MCF 10A (cell line): ENCODE measurements at regions of chr18 and their contacts with region 1.

Region 1: GRCh38 chr18:74896390-74896991 is 298.8 kb downstream of the ZNF407 start:
- DNase-seq: peak; percentile 60
- H3K4me3 Mint-ChIP-seq: no peak overlapping the region
- H3K27ac Mint-ChIP-seq: no peak overlapping the region
- H3K4me1 Mint-ChIP-seq: peaks cover 19% of the 10 kb centered on the region
- H3K27me3 Mint-ChIP-seq: no peaks in the 10 kb centered on the region
- CTCF ChIP-seq: peak; percentile 52

Region 2: GRCh38 chr18:74951165-74951760 is 54.8 kb after region 1 on chr18:
- CTCF ChIA-PET with region 1: interaction called, 3 read pairs
- POLR2A ChIA-PET with region 1: interaction called, 5 read pairs
- intact Hi-C with region 1: loop called (anchors 2 kb)
- DNase-seq: peak; percentile 95
- H3K4me3 Mint-ChIP-seq: no peak overlapping the region
- H3K27ac Mint-ChIP-seq: peak overlapping the region; percentile 97
- H3K4me1 Mint-ChIP-seq: peaks cover 12% of the 10 kb centered on the region
- H3K27me3 Mint-ChIP-seq: no peaks in the 10 kb centered on the region
- CTCF ChIP-seq: no peak

Region 3: DNA sequence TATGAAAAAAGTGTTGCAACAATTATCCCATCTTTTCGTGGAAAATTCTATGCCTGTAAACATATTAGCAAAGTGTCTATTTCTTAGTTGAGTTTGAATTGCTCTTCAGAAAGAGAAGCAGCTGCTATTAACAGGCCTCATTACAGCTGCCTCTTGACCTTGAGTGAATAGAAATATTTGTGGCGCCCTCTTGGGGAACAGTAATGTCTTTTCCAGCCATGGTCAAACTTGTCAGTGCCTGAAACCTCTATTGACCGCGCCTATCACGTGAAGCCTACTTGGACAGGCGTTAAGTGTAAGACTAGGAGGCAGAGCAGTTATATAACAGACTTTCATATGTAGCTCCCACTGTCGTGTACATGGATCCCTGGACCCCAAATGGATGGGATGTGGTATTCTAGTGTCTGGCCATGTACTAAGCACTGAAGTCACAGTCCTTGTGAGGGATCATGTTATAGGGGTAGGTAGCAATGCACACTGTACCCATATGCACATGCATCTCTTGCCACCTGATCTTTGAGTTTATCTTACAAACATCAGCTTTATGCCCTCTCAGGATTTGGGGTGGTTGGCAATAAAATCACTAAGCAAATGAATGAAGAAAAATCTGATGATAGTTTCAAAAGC is 67.4 kb after region 1 on chr18:
- CTCF ChIA-PET with region 1: interaction called, 16 read pairs
- POLR2A ChIA-PET with region 1: no interaction called
- intact Hi-C with region 1: no loop called
- DNase-seq: peak; percentile 69
- H3K4me3 Mint-ChIP-seq: no peak overlapping the region
- H3K27ac Mint-ChIP-seq: no peak overlapping the region
- H3K4me1 Mint-ChIP-seq: no peaks in the 10 kb centered on the region
- H3K27me3 Mint-ChIP-seq: no peaks in the 10 kb centered on the region
- CTCF ChIP-seq: peak; percentile 37